ENCODE measurements at regions of chr3 and their contacts with region 1.

Region 1: DNA sequence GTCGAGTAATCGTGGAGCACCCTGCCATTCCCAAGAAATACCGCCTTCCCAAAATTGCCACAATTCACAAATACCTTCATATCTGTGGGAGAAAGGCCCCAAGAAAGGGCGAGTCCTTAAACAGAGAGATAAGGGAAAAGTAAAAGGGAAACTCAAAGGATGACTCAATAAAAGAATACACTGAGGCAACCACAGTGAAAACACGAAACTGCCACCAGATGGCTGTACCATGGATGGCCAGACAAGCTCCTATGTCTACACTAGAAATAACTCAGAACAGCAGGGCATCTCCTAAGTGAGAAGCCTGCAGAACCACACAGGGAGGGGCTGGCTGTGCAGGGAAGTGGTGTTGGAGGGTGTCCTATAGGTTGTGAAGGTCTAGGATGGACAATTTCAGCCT is 25.0 kb downstream of the SRGAP3 start:
- DNase-seq: no peak
- H3K4me3 ChIP-seq: no peak overlapping the region
- H3K27ac ChIP-seq: no peak overlapping the region
- H3K4me1 ChIP-seq: no peaks in the 10 kb centered on the region
- H3K27me3 ChIP-seq: no peaks in the 10 kb centered on the region
- CTCF ChIP-seq: no peak

Region 2: GRCh38 chr3:9056581-9056980 is 167.9 kb before region 1 on chr3:
- CTCF ChIA-PET with region 1: no interaction called
- POLR2A ChIA-PET with region 1: no interaction called
- intact Hi-C with region 1: no loop called
- DNase-seq: no peak
- H3K4me3 ChIP-seq: no peak overlapping the region
- H3K27ac ChIP-seq: no peak overlapping the region
- H3K4me1 ChIP-seq: no peaks in the 10 kb centered on the region
- H3K27me3 ChIP-seq: no peaks in the 10 kb centered on the region
- CTCF ChIP-seq: no peak

Region 3: DNA sequence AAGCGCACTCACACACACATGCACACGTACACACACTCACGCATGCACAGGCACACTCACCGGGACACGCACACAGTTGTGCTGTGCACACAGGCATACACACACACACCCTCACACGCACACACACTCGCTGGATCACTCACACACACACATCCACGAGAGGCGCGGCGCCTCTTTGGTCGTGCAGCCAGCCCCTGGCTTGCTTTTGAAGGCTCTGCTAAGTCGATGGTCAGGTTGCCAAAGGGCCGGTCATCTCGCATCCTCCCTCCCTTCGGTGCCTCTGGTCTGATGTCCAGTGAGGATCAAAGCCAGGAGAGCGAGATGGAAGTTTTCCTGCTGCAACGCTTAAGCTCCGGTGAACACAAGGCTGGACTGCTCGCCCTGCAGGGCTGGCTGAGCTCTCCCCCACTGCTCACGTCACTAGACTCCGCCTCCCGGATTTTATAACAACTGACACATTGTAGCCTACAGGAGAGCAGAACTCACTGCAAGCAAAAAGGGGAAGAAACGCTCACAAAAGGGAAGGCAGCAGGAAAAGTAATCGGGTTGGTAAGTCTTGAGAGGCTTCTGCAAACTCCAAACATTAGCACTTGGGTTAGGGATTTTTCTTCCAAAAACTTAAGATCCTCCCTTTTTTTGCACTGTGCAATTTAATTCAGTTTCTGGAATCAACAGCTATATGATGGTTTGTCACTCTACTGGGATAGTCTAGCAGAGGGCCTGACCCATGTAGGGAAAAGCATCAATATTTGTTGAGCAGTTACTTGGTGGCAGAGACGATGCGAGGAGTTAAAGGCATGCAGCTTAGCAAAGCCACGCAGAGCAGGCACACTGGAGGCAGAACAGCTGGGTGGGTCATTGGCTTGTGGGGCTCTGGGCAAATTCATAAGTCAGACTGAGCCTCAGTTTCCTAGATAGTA is 25.0 kb after region 1 on chr3 and contains the start of gene SRGAP3:
- CTCF ChIA-PET with region 1: no interaction called
- POLR2A ChIA-PET with region 1: no interaction called
- intact Hi-C with region 1: no loop called
- DNase-seq: peak; percentile 93
- H3K4me3 ChIP-seq: peak within 1 kb of the TSS; percentile 50
- H3K27ac ChIP-seq: no peak within 1 kb of the TSS
- H3K4me1 ChIP-seq: peaks cover 3% of the 10 kb centered on the region
- H3K27me3 ChIP-seq: peaks cover 6% of the 10 kb centered on the region
- CTCF ChIP-seq: peak; percentile 32
- total RNA-seq, gene SRGAP3: 0.69 and 0.81 TPM in 2 replicates

Region 4: DNA sequence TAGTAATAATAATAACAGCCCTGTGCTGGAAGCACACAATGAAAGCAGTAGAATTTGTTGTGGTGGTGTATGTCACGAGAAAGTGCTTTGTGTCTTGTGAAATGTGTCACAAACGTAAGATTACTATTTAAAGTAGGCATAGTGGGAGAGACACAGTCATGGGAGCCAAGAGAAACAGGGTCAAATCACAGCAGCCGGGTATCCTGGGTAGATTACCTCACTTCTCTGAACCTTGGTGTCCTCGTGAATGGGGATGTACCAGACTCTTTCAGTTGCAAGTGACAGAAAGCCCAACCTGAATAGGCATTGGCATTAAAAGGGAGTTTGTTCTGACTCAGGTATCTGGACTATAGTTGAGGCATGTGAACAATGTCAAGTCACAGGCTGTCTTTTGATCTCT is 54.0 kb after region 1 on chr3:
- CTCF ChIA-PET with region 1: interaction called, 10 read pairs
- POLR2A ChIA-PET with region 1: no interaction called
- intact Hi-C with region 1: no loop called
- DNase-seq: no peak
- H3K4me3 ChIP-seq: no peak overlapping the region
- H3K27ac ChIP-seq: no peak overlapping the region
- H3K4me1 ChIP-seq: no peaks in the 10 kb centered on the region
- H3K27me3 ChIP-seq: no peaks in the 10 kb centered on the region
- CTCF ChIP-seq: no peak

Region 5: DNA sequence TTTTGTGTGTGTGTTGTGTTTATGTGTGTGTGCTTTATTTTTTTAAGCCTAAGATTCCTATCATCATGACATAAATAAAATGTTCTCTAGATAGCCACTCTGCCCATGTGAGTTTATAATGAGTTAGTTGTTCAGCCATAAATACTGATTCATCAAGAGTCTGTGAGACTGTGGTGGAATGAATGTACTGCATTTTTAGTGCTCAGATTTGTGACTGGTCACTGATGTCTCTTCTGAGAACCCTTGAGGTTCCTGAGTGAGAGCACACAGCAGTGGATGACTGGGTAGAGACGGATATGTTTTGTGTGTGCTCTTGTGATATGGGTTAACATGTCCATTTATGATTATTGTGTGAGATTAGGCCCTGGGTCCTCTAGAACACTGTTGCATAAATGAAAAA is 224.2 kb after region 1 on chr3:
- CTCF ChIA-PET with region 1: no interaction called
- POLR2A ChIA-PET with region 1: no interaction called
- intact Hi-C with region 1: no loop called
- DNase-seq: no peak
- H3K4me3 ChIP-seq: no peak overlapping the region
- H3K27ac ChIP-seq: no peak overlapping the region
- H3K4me1 ChIP-seq: no peaks in the 10 kb centered on the region
- H3K27me3 ChIP-seq: no peaks in the 10 kb centered on the region
- CTCF ChIP-seq: no peak

Region 6: GRCh38 chr3:9669720-9670432 is 445.4 kb after region 1 on chr3:
- CTCF ChIA-PET with region 1: no interaction called
- POLR2A ChIA-PET with region 1: no interaction called
- intact Hi-C with region 1: no loop called
- DNase-seq: no peak
- H3K4me3 ChIP-seq: no peak overlapping the region
- H3K27ac ChIP-seq: no peak overlapping the region
- H3K4me1 ChIP-seq: no peaks in the 10 kb centered on the region
- H3K27me3 ChIP-seq: no peaks in the 10 kb centered on the region
- CTCF ChIP-seq: no peak

Measured in A673 (cell line).